Activated B cell treated with CpG ODN at 0.5 μM for 24 hours (primary cell): ENCODE measurements at regions of chr15 and their contacts with region 1.

Region 1: GRCh38 chr15:44728576-44729407 is 7.5 kb upstream of the TRIM69 start:
- DNase-seq: peak; percentile 86
- ATAC-seq: peak; percentile 74
- H3K4me3 Mint-ChIP-seq: peak overlapping the region; percentile 99
- H3K27ac Mint-ChIP-seq: peak overlapping the region; percentile 100
- H3K4me1 Mint-ChIP-seq: peaks cover 75% of the 10 kb centered on the region
- H3K27me3 Mint-ChIP-seq: no peaks in the 10 kb centered on the region
- CTCF ChIP-seq: no peak

Region 2: DNA sequence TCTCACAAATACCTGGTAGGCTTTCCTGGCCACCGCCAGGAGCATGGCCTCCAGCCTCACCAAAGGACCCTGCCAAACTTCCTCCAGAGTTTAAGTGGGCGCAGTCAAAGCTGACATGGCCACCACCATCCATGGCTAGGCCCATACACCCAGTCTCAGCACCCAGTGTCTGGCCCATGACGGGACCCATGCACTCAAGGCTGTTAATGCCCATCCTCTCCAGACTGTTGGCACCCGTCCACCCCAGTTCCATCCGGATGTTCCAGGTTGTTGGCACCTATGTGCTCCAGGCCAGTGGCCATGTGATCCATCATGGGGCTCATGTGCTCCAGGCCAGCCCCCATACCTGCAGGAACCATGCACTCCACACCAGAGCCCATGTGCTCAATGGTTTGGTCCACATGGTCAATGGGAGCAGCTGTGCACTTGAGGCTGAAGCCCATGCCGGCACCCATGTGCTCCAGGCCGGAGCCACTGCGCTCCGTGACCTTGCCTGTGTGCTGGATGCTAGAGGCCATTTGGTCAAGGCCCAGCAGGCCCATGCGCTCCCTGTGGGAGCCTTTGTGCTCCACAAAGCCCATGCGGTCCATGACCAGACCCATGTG is 280.9 kb before region 1 on chr15:
- CTCF ChIA-PET with region 1: no interaction called
- POLR2A ChIA-PET with region 1: no interaction called
- intact Hi-C with region 1: no loop called
- DNase-seq: no peak
- ATAC-seq: no peak
- H3K4me3 Mint-ChIP-seq: no peak overlapping the region
- H3K27ac Mint-ChIP-seq: no peak overlapping the region
- H3K4me1 Mint-ChIP-seq: peaks cover 25% of the 10 kb centered on the region
- H3K27me3 Mint-ChIP-seq: no peaks in the 10 kb centered on the region
- CTCF ChIP-seq: no peak

Region 3: DNA sequence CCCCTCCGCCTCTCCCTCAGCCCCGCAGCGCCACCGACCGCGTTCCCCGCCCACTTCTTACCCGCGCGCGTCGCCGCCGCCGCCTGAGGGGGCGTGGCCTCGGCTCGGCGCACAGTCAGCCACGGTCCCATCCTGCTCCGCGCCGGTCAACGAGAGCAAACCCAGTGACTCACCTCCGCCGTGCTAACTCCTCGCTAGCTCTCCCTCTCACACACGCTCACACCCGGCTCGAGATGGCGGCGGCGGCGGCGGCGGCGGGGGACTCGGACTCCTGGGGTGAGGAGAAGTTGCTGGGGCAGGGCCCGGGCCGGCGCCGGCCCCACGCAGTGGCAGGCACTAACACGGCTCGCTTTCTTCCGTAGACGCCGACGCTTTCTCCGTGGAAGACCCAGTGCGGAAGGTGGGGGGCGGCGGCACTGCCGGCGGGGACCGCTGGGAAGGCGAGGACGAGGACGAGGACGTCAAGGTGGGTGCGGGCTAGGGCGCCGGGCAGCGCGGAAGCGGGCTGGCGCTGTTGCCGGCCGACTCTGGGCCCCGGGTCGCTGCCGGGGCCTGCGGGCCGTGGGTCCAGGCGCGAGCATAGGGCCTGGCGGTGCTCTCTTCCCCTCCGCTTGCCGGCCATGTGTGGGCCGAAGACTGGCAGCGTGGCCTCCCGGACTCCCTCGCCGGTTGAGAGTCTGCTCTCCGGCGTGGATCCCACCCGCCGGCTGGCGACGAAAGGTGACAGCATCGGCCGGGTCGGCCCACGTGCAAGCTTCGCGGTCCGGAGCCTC is 191.6 kb before region 1 on chr15 and contains the start of gene EIF3J:
- CTCF ChIA-PET with region 1: no interaction called
- POLR2A ChIA-PET with region 1: interaction called, 9 read pairs
- intact Hi-C with region 1: loop called (anchors 2 kb)
- DNase-seq: peak; percentile 90
- ATAC-seq: peak; percentile 89
- H3K4me3 Mint-ChIP-seq: peak within 1 kb of the TSS; percentile 92
- H3K27ac Mint-ChIP-seq: peak within 1 kb of the TSS; percentile 93
- H3K4me1 Mint-ChIP-seq: peaks cover 50% of the 10 kb centered on the region
- H3K27me3 Mint-ChIP-seq: no peaks in the 10 kb centered on the region
- CTCF ChIP-seq: no peak
- total RNA-seq, gene EIF3J: 78.9 and 88.4 TPM in 2 replicates

Region 4: GRCh38 chr15:44670491-44670890 is 58.3 kb before region 1 on chr15:
- CTCF ChIA-PET with region 1: interaction called, 239 read pairs
- POLR2A ChIA-PET with region 1: interaction called, 798 read pairs
- intact Hi-C with region 1: no loop called
- DNase-seq: no peak
- ATAC-seq: peak; percentile 14
- H3K4me3 Mint-ChIP-seq: peak overlapping the region; percentile 42
- H3K27ac Mint-ChIP-seq: peak overlapping the region; percentile 95
- H3K4me1 Mint-ChIP-seq: peaks cover 88% of the 10 kb centered on the region
- H3K27me3 Mint-ChIP-seq: no peaks in the 10 kb centered on the region
- CTCF ChIP-seq: no peak

Region 5: DNA sequence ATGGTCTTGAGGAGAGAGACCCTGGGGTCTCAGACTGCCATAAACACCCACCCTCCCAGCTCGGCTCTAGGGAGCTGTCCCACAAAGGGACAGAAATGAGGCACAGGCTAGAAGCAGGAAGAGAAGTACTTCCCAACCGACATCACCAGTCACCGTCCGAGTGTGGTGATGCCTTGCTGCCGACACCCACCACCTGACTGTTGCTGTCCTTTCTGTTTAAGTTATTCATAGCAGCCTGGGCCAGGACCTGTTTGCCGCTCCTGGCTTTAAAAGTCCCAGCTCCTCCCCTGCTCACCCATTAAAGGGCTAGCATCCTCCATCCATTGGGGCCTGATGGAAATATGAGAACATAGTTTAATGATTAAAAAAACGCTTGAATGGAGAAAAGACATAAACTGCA is 52.1 kb before region 1 on chr15:
- CTCF ChIA-PET with region 1: no interaction called
- POLR2A ChIA-PET with region 1: interaction called, 45 read pairs
- intact Hi-C with region 1: no loop called
- DNase-seq: no peak
- ATAC-seq: peak; percentile 29
- H3K4me3 Mint-ChIP-seq: peak overlapping the region; percentile 32
- H3K27ac Mint-ChIP-seq: peak overlapping the region; percentile 83
- H3K4me1 Mint-ChIP-seq: peaks cover 78% of the 10 kb centered on the region
- H3K27me3 Mint-ChIP-seq: no peaks in the 10 kb centered on the region
- CTCF ChIP-seq: no peak

Region 6: DNA sequence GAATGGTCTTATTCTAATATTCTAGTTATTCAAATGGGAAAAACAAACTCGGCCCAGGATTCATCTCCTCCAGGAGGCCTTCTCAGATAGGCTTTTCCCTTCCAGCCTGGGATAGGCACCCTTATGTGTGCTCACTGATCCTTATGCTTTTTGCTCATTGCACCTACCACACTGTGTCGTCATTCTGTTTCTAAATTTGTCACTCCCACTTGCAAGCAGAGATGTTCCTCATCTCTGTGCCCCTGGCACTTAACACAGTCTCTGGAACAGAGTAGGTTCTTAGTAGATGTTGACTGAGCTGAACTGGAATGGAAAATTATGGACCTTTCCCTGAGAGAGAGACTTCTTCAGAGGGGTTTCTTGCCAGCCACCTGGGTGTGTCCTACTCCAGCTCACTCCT is 46.6 kb before region 1 on chr15:
- CTCF ChIA-PET with region 1: interaction called, 3 read pairs
- POLR2A ChIA-PET with region 1: interaction called, 45 read pairs
- intact Hi-C with region 1: no loop called
- DNase-seq: no peak
- ATAC-seq: peak; percentile 26
- H3K4me3 Mint-ChIP-seq: peak overlapping the region; percentile 60
- H3K27ac Mint-ChIP-seq: peak overlapping the region; percentile 91
- H3K4me1 Mint-ChIP-seq: peaks cover 76% of the 10 kb centered on the region
- H3K27me3 Mint-ChIP-seq: no peaks in the 10 kb centered on the region
- CTCF ChIP-seq: no peak

Region 7: GRCh38 chr15:45048794-45049631 is 320.2 kb after region 1 on chr15:
- CTCF ChIA-PET with region 1: no interaction called
- POLR2A ChIA-PET with region 1: interaction called, 6 read pairs
- intact Hi-C with region 1: loop called (anchors 2 kb)
- DNase-seq: no peak
- ATAC-seq: peak; percentile 87
- H3K4me3 Mint-ChIP-seq: peak overlapping the region; percentile 78
- H3K27ac Mint-ChIP-seq: peak overlapping the region; percentile 98
- H3K4me1 Mint-ChIP-seq: peaks cover 39% of the 10 kb centered on the region
- H3K27me3 Mint-ChIP-seq: no peaks in the 10 kb centered on the region
- CTCF ChIP-seq: no peak